MCF 10A (cell line): ENCODE measurements at regions of chr1 and their contacts with region 1.

Region 1: DNA sequence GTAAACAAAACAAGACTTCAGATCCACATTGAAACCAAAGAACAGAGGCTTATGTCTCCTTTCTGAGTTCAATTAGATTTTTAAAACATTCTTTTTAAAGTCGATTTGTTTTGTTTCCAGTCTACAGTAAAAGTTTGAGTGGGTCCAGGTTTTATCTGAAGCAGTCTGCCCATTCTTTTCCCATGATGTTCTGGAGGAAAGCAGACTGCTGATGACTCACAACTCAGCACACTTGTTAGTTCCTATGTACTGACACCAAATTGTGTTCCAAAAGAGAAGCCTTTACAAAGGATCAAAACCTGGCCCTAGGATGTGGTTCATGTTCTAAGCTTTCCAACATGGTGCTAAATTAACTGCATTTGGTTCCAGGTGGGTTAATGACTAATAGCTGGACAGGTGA is 11.4 kb upstream of the CCN1 start:
- DNase-seq: no peak
- H3K4me3 Mint-ChIP-seq: no peak overlapping the region
- H3K27ac Mint-ChIP-seq: peak overlapping the region; percentile 21
- H3K4me1 Mint-ChIP-seq: peaks cover 49% of the 10 kb centered on the region
- H3K27me3 Mint-ChIP-seq: no peaks in the 10 kb centered on the region
- CTCF ChIP-seq: no peak

Region 2: GRCh38 chr1:85406887-85407533 is 162.1 kb before region 1 on chr1:
- CTCF ChIA-PET with region 1: no interaction called
- POLR2A ChIA-PET with region 1: interaction called, 4 read pairs
- intact Hi-C with region 1: loop called (anchors 5 kb)
- DNase-seq: peak; percentile 81
- H3K4me3 Mint-ChIP-seq: no peak overlapping the region
- H3K27ac Mint-ChIP-seq: peak overlapping the region; percentile 92
- H3K4me1 Mint-ChIP-seq: peaks cover 14% of the 10 kb centered on the region
- H3K27me3 Mint-ChIP-seq: no peaks in the 10 kb centered on the region
- CTCF ChIP-seq: no peak

Region 3: GRCh38 chr1:85464497-85465098 is 104.5 kb before region 1 on chr1:
- CTCF ChIA-PET with region 1: no interaction called
- POLR2A ChIA-PET with region 1: interaction called, 16 read pairs
- intact Hi-C with region 1: no loop called
- DNase-seq: peak; percentile 53
- H3K4me3 Mint-ChIP-seq: peak overlapping the region; percentile 57
- H3K27ac Mint-ChIP-seq: no peak overlapping the region
- H3K4me1 Mint-ChIP-seq: peaks cover 11% of the 10 kb centered on the region
- H3K27me3 Mint-ChIP-seq: no peaks in the 10 kb centered on the region
- CTCF ChIP-seq: no peak

Region 4: GRCh38 chr1:85544689-85545215 is 24.4 kb before region 1 on chr1:
- CTCF ChIA-PET with region 1: interaction called, 3 read pairs
- POLR2A ChIA-PET with region 1: interaction called, 20 read pairs
- intact Hi-C with region 1: no loop called
- DNase-seq: peak; percentile 65
- H3K4me3 Mint-ChIP-seq: no peak overlapping the region
- H3K27ac Mint-ChIP-seq: peak overlapping the region; percentile 13
- H3K4me1 Mint-ChIP-seq: peaks cover 16% of the 10 kb centered on the region
- H3K27me3 Mint-ChIP-seq: no peaks in the 10 kb centered on the region
- CTCF ChIP-seq: no peak

Region 5: DNA sequence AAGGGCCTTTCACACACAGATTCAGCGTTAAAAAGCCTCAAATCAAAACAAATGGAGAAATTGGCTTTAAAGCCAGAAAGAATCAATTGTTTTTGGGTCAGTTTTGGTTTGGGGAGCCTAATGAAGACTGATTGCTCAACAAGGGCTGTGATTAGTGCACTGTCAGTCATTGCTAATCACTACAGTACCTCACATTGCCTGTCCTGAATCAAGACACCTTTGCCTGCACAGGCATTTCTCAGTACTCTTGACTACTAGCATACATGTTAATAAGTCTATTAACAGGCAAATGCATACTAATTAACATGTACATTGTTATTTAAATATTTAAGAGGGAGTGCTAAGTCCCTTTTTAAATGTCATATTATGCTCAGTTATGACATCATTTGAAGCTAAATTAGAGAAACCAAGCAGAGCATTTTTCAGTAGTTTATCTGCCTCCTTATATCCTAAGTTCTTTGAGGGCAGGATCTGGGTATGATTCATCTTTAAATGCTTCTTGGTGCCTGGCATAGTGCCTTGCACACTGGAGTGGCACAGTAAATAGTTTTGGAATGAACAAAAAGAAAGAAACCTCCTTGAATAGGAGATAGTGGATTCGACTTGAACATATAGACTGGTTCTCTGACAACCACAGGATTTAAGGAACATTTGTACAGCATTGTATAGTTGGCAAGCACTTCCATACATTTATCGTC is 14.3 kb before region 1 on chr1:
- CTCF ChIA-PET with region 1: interaction called, 10 read pairs
- POLR2A ChIA-PET with region 1: interaction called, 52 read pairs
- intact Hi-C with region 1: no loop called
- DNase-seq: peak; percentile 65
- H3K4me3 Mint-ChIP-seq: no peak overlapping the region
- H3K27ac Mint-ChIP-seq: peak overlapping the region; percentile 52
- H3K4me1 Mint-ChIP-seq: peaks cover 25% of the 10 kb centered on the region
- H3K27me3 Mint-ChIP-seq: no peaks in the 10 kb centered on the region
- CTCF ChIP-seq: no peak